GM13976 (cell line): ENCODE measurements at regions of chr2 and their contacts with region 1.

Region 1: GRCh38 chr2:21317131-21317530 is 193.4 kb downstream of the TDRD15 start:
- DNase-seq: peak; percentile 49
- CTCF ChIP-seq: peak; percentile 58

Region 2: GRCh38 chr2:21042958-21043743 is 274.0 kb before region 1 on chr2:
- in situ Hi-C with region 1: loop called (anchors 25 kb)
- DNase-seq: peak; percentile 82
- CTCF ChIP-seq: peak; percentile 96